ENCODE measurements at regions of chr22 and their contacts with region 1.

Region 1: GRCh38 chr22:30005213-30005857 is 74.9 kb upstream of the HORMAD2 start:
- DNase-seq: peak; percentile 77
- H3K4me3 ChIP-seq: no peak overlapping the region
- H3K27ac ChIP-seq: no peak overlapping the region
- H3K4me1 ChIP-seq: peaks cover 4% of the 10 kb centered on the region
- H3K27me3 ChIP-seq: no peaks in the 10 kb centered on the region
- CTCF ChIP-seq: peak; percentile 85 to 98
- POLR2A ChIP-seq: no peak

Region 2: DNA sequence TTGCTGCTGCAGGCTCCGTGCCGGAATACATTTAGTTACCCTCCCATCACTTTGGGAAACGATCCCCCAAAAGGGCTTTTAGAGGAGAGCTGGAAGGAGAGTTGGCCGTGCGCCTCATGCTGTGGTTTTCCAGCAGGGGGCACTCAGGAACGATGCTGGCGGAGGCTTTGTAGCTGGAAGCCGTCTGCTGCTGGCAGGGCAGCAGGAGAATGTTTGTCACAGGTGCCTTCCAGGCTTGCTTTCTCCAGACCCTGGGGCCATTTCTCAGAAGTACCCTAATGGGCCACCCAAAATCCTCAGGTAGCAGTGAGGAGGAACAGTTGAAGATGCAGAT is 315.5 kb before region 1 on chr22:
- CTCF ChIA-PET with region 1: interaction called, 68 read pairs
- POLR2A ChIA-PET with region 1: no interaction called
- dilution Hi-C with region 1: no loop called
- intact Hi-C with region 1: loop called (anchors 1 kb)
- DNase-seq: peak; percentile 43
- H3K4me3 ChIP-seq: no peak overlapping the region
- H3K27ac ChIP-seq: no peak overlapping the region
- H3K4me1 ChIP-seq: no peaks in the 10 kb centered on the region
- H3K27me3 ChIP-seq: no peaks in the 10 kb centered on the region
- CTCF ChIP-seq: peak; percentile 73 to 83
- POLR2A ChIP-seq: no peak

Region 3: DNA sequence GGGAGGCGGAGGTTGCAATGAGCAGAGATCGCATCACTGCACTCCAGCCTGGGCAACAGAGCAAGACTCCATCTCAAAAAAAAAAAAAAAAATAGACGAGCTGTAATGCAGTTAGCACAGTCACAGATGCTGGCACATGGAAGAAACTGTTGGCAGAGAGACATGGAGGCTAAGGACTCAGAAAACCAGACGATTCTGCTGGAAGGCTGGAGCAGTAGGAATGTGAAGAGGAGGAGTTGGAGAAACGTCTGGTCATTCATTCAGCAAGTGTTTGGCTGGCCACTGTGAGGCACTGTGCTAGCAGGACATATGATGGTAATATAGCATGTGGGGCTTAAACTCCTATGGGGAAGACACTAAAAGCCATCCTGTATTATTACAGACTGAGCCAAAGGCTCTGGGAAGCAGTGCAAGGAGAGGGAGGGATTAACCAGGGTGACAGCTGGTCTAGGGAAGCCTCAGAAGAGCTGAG is 233.1 kb before region 1 on chr22:
- CTCF ChIA-PET with region 1: interaction called, 27 read pairs
- POLR2A ChIA-PET with region 1: interaction called, 4 read pairs
- dilution Hi-C with region 1: no loop called
- intact Hi-C with region 1: loop called (anchors 1 kb)
- DNase-seq: peak; percentile 31
- H3K4me3 ChIP-seq: no peak overlapping the region
- H3K27ac ChIP-seq: no peak overlapping the region
- H3K4me1 ChIP-seq: peaks cover 6% of the 10 kb centered on the region
- H3K27me3 ChIP-seq: no peaks in the 10 kb centered on the region
- CTCF ChIP-seq: peak; percentile 37 to 41
- POLR2A ChIP-seq: no peak

Region 4: GRCh38 chr22:29837780-29838598 is 167.3 kb before region 1 on chr22 and contains the start of gene ASCC2:
- CTCF ChIA-PET with region 1: interaction called, 12 read pairs
- POLR2A ChIA-PET with region 1: no interaction called
- dilution Hi-C with region 1: no loop called
- intact Hi-C with region 1: no loop called
- DNase-seq: peak; percentile 97
- H3K4me3 ChIP-seq: peak within 1 kb of the TSS; percentile 79 to 92 (median 86)
- H3K27ac ChIP-seq: peak within 1 kb of the TSS; percentile 63
- H3K4me1 ChIP-seq: peaks cover 15% of the 10 kb centered on the region
- H3K27me3 ChIP-seq: no peaks in the 10 kb centered on the region
- CTCF ChIP-seq: no peak
- POLR2A ChIP-seq: peak; percentile 88
- total RNA-seq, gene ASCC2: 60.4 and 60.7 TPM in 2 replicates

Region 5: DNA sequence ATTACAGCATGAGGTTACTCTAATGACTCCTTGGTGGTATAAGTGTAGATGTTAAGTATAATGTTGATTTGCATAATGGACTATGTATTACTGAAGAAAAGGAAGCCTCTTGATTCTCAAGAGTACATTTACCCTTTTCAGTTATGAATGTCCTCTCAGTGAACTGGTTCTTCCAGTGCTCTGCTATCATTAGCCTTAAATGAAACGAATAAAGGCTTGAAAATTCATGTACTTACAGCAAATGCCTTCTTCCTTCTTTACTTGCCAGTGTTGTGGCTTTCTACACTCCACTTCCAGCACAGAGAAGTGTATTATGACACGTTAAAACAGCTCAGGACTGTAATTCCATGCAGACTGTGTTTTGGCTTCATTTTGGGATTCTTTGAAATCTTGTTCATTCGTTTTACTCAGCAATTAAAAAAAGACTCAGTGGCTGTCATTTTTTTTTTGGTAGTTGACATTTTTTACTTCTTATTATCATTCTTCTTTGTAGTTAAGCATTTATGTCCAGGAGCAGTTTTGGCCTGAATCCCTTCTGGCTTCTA is 25.5 kb before region 1 on chr22:
- CTCF ChIA-PET with region 1: interaction called, 20 read pairs
- POLR2A ChIA-PET with region 1: no interaction called
- dilution Hi-C with region 1: no loop called
- intact Hi-C with region 1: no loop called
- DNase-seq: no peak
- H3K4me3 ChIP-seq: no peak overlapping the region
- H3K27ac ChIP-seq: no peak overlapping the region
- H3K4me1 ChIP-seq: peaks cover 9% of the 10 kb centered on the region
- H3K27me3 ChIP-seq: no peaks in the 10 kb centered on the region
- CTCF ChIP-seq: no peak
- POLR2A ChIP-seq: no peak

Region 6: GRCh38 chr22:30089655-30089974 is 84.3 kb after region 1 on chr22:
- CTCF ChIA-PET with region 1: interaction called, 17 read pairs
- POLR2A ChIA-PET with region 1: no interaction called
- dilution Hi-C with region 1: no loop called
- intact Hi-C with region 1: loop called (anchors 5 kb)
- DNase-seq: no peak
- H3K4me3 ChIP-seq: no peak overlapping the region
- H3K27ac ChIP-seq: no peak overlapping the region
- H3K4me1 ChIP-seq: no peaks in the 10 kb centered on the region
- H3K27me3 ChIP-seq: peaks cover 4 to 10% of the 10 kb centered on the region in 2 experiments
- CTCF ChIP-seq: no peak
- POLR2A ChIP-seq: no peak

Region 7: DNA sequence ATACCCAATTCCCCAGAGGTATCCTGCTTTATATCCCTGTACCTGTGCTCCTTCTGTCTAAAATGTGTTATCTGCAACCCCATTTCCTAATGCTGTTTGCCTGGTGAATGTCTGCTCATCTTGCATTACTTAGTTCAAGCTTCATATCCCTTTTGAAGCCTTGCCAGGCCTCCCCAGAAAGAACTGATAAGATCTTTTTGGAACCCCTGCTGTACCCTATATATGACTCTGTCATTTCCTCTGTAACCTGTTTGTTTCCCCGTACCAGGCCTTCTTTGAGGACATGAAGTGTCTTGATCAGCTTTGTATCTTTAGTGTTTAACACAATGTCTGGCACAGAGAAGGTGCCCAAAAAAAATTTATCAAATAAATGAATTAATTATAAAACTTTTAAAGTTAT is 163.7 kb after region 1 on chr22:
- CTCF ChIA-PET with region 1: no interaction called
- POLR2A ChIA-PET with region 1: no interaction called
- dilution Hi-C with region 1: no loop called
- intact Hi-C with region 1: no loop called
- DNase-seq: no peak
- H3K4me3 ChIP-seq: no peak overlapping the region
- H3K27ac ChIP-seq: no peak overlapping the region
- H3K4me1 ChIP-seq: no peaks in the 10 kb centered on the region
- H3K27me3 ChIP-seq: peaks cover 44 to 77% of the 10 kb centered on the region in 2 experiments
- CTCF ChIP-seq: no peak
- POLR2A ChIP-seq: no peak

Measured in endothelial cell of umbilical vein (primary cell).